ENCODE measurements at regions of chr15 and their contacts with region 1.

Region 1: DNA sequence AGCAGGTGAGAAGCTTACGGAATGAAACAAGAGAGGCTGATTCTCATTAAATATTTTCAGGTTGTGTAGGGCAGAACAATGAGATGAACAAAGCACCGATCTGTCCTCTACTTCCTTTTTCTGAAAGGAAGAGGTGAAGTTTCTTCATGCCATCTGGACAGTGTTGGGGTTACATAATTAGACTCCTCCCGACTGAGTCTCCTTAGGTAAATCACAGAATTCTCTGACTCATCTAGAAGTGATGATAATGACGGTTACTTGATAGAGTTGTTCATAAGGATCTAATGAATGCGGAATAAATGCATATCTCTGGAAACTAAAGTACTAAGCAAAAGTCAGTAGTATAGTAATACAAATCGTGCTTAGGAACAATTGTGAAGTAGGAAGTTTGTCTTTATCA is 21.2 kb downstream of the CRTC3 start:
- DNase-seq: no peak
- ATAC-seq: peak; percentile 76
- H3K4me3 Mint-ChIP-seq: peak overlapping the region; percentile 66
- H3K27ac Mint-ChIP-seq: peak overlapping the region; percentile 85
- H3K4me1 Mint-ChIP-seq: peaks cover 65% of the 10 kb centered on the region
- H3K27me3 Mint-ChIP-seq: no peaks in the 10 kb centered on the region
- CTCF ChIP-seq: no peak

Region 2: DNA sequence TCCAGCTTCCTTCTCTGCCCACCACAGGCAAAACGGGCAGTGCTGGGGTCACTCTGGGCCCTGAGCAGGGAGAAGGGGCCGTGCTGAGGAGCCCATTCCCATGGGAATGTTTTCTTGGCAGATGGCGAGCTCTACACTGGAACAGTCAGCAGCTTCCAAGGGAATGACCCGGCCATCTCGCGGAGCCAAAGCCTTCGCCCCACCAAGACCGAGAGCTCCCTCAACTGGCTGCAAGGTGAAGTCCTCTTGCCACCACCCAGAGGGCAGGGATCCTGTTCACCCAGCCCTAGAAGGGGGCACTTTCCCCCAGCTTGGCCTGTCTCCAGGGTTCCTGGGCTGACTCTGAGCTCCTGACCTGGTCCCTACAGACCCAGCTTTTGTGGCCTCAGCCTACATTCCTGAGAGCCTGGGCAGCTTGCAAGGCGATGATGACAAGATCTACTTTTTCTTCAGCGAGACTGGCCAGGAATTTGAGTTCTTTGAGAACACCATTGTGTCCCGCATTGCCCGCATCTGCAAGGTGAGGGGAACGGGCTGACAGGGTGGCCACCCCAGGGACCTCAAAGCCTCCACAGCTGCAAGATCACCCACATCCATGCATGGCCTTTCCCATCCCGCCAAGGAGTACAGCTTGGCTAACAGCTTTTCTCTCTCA is 329.5 kb before region 1 on chr15:
- CTCF ChIA-PET with region 1: no interaction called
- POLR2A ChIA-PET with region 1: no interaction called
- intact Hi-C with region 1: no loop called
- DNase-seq: no peak
- ATAC-seq: peak; percentile 43
- H3K4me3 Mint-ChIP-seq: no peak overlapping the region
- H3K27ac Mint-ChIP-seq: peak overlapping the region; percentile 56
- H3K4me1 Mint-ChIP-seq: peaks cover 49% of the 10 kb centered on the region
- H3K27me3 Mint-ChIP-seq: no peaks in the 10 kb centered on the region
- CTCF ChIP-seq: no peak

Region 3: GRCh38 chr15:90539789-90540188 is 11.1 kb before region 1 on chr15:
- CTCF ChIA-PET with region 1: interaction called, 3 read pairs
- POLR2A ChIA-PET with region 1: interaction called, 3 read pairs
- intact Hi-C with region 1: loop called (anchors 2 kb)
- DNase-seq: no peak
- ATAC-seq: no peak
- H3K4me3 Mint-ChIP-seq: no peak overlapping the region
- H3K27ac Mint-ChIP-seq: no peak overlapping the region
- H3K4me1 Mint-ChIP-seq: peaks cover 32% of the 10 kb centered on the region
- H3K27me3 Mint-ChIP-seq: no peaks in the 10 kb centered on the region
- CTCF ChIP-seq: no peak

Region 4: DNA sequence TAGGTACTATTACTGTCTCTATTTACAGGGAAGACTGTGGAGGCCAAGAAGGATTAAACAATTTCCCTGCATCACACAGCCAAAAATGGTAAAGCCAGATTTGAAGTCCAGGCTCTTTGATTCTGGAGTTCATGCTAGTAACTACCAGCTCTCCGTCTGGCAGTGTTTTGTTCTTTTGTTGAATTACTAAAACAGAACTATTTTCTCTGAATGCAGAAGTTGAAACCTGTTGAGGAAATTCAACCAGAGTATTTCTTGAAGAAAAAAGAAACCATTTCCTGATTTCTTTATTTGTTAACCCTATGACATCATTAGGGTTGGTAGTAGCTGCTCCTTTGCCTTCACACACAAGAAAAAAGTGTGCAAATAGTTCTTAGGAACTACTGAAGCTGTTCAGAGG is 13.1 kb after region 1 on chr15:
- CTCF ChIA-PET with region 1: no interaction called
- POLR2A ChIA-PET with region 1: interaction called, 4 read pairs
- intact Hi-C with region 1: loop called (anchors 1 kb)
- DNase-seq: no peak
- ATAC-seq: peak; percentile 75
- H3K4me3 Mint-ChIP-seq: peak overlapping the region; percentile 58
- H3K27ac Mint-ChIP-seq: peak overlapping the region; percentile 88
- H3K4me1 Mint-ChIP-seq: peaks cover 88% of the 10 kb centered on the region
- H3K27me3 Mint-ChIP-seq: no peaks in the 10 kb centered on the region
- CTCF ChIP-seq: no peak

Measured in activated B cell treated with CpG ODN at 0.5 μM for 24 hours (primary cell).